Psoas muscle (tissue), 8 donors: ENCODE measurements at regions of chr2 and their contacts with region 1.

Region 1: GRCh38 chr2:197777823-197778407 is 7.2 kb downstream of the BOLL start:
- DNase-seq: no peak
- ATAC-seq: peak in 1 of 4 donors; percentile 50
- H3K4me3 ChIP-seq: no peak overlapping the region
- H3K27ac ChIP-seq: no peak overlapping the region
- H3K4me1 ChIP-seq: peaks cover 24% of the 10 kb centered on the region
- H3K27me3 ChIP-seq: no peaks in the 10 kb centered on the region
- CTCF ChIP-seq: peak; percentile 79

Region 2: DNA sequence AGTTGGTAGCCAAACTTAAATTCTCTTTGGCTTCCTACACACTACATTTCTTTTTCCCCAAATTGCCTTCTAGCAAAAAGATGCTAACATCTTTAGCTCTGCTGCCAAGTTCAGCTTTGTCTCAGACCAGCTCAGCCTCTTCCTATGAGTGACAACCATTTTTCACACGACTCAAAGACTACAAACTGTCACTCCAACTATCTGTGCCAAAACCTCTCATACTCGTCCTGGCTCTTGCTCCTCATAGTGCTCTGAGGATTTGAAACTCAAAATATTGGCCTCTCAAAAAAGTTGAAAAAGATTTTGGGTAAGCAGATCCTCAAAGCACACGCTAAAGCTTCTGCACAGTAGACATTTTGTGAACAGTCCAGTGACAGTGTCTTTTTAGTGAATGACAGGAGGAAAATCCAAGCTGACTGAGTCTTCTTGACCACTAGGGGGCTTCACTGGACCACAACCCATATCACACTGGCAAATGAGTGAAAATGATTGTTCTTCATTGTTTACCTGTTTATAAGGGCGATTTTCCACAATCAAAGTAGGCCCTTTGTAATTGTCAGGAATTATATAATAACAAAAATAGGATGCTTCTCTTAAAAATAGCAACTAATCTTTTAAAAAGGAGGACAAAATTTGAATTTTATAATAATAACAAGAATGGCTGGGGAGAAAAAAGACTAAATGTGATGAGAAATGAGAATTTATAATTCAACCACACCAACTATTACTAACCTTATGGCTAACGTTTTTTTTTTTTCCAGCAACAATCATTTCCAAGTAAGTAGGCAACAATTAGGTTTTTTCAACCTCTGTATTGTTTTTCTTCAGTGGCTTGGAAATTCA is 765.9 kb before region 1 on chr2:
- intact Hi-C with region 1: loop called in 1 of 2 experiments (anchors 5 kb)
- DNase-seq: no peak
- ATAC-seq: peak; percentile 49 to 78 (median 68)
- H3K4me3 ChIP-seq: no peak overlapping the region
- H3K27ac ChIP-seq: no peak overlapping the region
- H3K4me1 ChIP-seq: no peaks in the 10 kb centered on the region
- H3K27me3 ChIP-seq: no peaks in the 10 kb centered on the region
- CTCF ChIP-seq: peak; percentile 83

Region 3: GRCh38 chr2:197425550-197425949 is 352.4 kb before region 1 on chr2:
- intact Hi-C with region 1: loop called in 1 of 2 experiments (anchors 10 kb)
- DNase-seq: no peak
- ATAC-seq: peak in 1 of 4 donors; percentile 32
- H3K4me3 ChIP-seq: no peak overlapping the region
- H3K27ac ChIP-seq: no peak overlapping the region
- H3K4me1 ChIP-seq: peaks cover 58% of the 10 kb centered on the region
- H3K27me3 ChIP-seq: no peaks in the 10 kb centered on the region
- CTCF ChIP-seq: no peak

Region 4: DNA sequence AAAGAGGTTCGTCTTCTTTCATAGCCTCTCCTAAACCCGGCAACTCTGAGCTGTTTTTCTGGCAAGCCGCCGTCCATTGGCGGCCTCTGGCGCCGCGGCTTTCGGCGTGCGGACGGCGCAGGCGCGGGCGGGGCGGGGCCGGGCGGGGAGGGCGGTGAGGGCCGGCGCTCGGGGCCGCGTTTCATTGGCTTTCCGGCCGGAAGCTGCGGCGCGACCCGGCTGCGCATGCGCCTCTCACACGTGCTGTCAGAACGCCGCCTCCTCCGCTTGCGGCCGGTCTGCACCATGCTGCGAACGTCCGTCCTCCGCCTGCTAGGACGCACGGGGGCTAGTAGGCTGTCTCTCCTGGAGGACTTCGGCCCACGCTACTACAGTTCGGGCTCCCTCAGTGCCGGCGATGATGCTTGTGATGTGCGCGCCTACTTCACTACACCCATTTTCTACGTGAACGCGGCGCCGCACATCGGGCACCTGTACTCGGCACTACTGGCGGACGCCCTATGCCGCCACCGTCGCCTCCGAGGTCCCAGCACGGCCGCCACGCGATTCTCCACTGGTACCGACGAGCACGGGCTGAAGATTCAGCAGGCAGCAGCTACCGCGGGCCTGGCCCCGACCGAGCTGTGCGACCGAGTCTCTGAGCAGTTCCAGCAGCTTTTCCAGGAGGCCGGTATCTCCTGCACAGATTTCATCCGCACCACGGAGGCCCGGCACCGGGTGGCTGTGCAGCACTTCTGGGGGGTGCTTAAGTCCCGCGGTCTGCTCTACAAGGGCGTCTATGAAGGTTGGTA is 72.6 kb before region 1 on chr2 and contains the start of gene MARS2:
- intact Hi-C with region 1: loop called in 1 of 2 experiments (anchors 2 kb)
- DNase-seq: peak; percentile 96 to 97
- ATAC-seq: peak; percentile 94 to 98 (median 96)
- H3K4me3 ChIP-seq: peak within 1 kb of the TSS; percentile 97
- H3K27ac ChIP-seq: peak within 1 kb of the TSS; percentile 90
- H3K4me1 ChIP-seq: peaks cover 22% of the 10 kb centered on the region
- H3K27me3 ChIP-seq: no peaks in the 10 kb centered on the region
- CTCF ChIP-seq: no peak
- total RNA-seq, gene MARS2: 5.9 to 12.6 (median 7.3) TPM